ENCODE measurements at regions of chr10 and their contacts with region 1.

Region 1: DNA sequence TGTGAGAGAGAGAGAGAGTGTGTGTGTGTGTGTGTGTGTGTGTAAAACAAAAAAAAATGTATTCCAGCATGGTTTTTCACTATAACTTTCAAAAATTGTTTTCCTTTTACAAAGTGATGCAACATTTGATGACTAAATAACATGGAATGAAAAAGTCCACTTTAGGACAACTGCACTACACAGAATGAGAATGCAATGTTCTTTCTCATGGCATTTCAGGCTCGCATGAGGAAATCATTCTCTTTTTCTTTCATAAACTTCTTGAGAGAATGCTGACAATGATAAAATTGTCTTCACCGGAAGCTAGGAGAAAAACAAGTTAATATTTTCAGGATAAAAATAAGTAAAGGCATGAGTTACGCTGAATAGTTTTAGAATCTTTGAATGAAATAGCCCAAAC is 53.7 kb downstream of the SLC16A12 start:
- DNase-seq: peak; percentile 42
- H3K4me3 ChIP-seq: no peak overlapping the region
- H3K27ac ChIP-seq: no peak overlapping the region
- H3K4me1 ChIP-seq: peaks cover 13% of the 10 kb centered on the region
- H3K27me3 ChIP-seq: no peaks in the 10 kb centered on the region
- CTCF ChIP-seq: no peak
- POLR2A ChIP-seq: no peak

Region 2: GRCh38 chr10:89466599-89467035 is 15.0 kb before region 1 on chr10:
- CTCF ChIA-PET with region 1: interaction called, 10 read pairs
- POLR2A ChIA-PET with region 1: no interaction called
- dilution Hi-C with region 1: no loop called
- intact Hi-C with region 1: no loop called
- DNase-seq: peak; percentile 31
- H3K4me3 ChIP-seq: no peak overlapping the region
- H3K27ac ChIP-seq: no peak overlapping the region
- H3K4me1 ChIP-seq: peaks cover 13% of the 10 kb centered on the region
- H3K27me3 ChIP-seq: no peaks in the 10 kb centered on the region
- CTCF ChIP-seq: peak; percentile 16 to 38
- POLR2A ChIP-seq: no peak

Measured in endothelial cell of umbilical vein (primary cell).